PC-9 (cell line): ENCODE measurements at regions of chr15 and their contacts with region 1.

Region 1: DNA sequence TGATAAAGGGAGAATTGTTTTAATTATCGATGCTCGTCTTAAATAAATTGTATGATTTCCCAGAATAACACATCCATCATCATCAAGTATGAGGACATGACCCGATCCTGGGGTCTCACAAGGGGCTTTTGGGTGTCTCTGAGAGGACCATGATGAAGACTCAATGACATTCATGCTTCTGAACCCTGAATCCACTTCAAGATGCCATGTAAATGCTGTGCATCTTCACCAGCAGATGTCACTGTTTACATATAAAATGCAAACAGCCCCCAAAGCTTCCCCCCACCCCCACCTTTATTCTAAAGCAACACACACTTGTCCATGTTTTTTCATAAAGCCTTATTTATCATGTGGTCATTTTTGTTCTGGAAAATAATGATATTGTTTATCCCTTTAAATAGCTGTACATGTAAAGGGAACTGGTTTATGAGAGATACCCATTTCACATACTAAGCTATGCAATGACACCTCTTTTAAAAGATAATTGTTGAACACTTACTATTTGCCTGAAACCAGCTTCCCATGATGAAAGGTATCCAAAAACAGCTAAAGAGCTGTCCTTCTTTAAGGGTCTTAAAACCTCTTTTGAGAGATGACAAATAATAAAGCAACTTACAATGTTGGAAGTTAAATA is 69.7 kb upstream of the UBE3A start:
- DNase-seq: no peak
- H3K4me3 ChIP-seq: no peak overlapping the region
- H3K27ac ChIP-seq: no peak overlapping the region
- H3K4me1 ChIP-seq: no peaks in the 10 kb centered on the region
- H3K27me3 ChIP-seq: peaks cover 2% of the 10 kb centered on the region; the same call in 1 of the 2 replicates
- CTCF ChIP-seq: peak; percentile 58

Region 2: DNA sequence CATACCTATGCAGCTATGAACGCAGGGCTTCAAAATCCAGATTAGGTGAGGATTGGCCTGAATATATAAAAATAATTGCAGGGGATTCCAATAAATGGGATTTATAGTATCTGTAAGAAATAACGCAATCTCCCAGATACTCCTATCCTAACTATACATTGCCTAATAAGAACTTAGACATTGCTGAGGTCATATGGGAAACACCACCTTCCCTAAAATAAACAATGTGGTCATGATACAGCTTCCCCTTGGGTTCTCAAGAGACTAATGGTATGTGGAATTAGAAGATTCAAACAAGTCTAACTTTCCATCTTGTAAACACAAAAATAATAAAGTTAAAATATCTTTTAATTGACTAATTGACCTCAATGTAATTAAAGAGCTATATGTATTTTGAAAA is 97.8 kb before region 1 on chr15:
- CTCF ChIA-PET with region 1: no interaction called
- POLR2A ChIA-PET with region 1: no interaction called
- intact Hi-C with region 1: no loop called
- DNase-seq: no peak
- H3K4me3 ChIP-seq: no peak overlapping the region
- H3K27ac ChIP-seq: no peak overlapping the region
- H3K4me1 ChIP-seq: no peaks in the 10 kb centered on the region
- H3K27me3 ChIP-seq: no peaks in the 10 kb centered on the region
- CTCF ChIP-seq: no peak

Region 3: DNA sequence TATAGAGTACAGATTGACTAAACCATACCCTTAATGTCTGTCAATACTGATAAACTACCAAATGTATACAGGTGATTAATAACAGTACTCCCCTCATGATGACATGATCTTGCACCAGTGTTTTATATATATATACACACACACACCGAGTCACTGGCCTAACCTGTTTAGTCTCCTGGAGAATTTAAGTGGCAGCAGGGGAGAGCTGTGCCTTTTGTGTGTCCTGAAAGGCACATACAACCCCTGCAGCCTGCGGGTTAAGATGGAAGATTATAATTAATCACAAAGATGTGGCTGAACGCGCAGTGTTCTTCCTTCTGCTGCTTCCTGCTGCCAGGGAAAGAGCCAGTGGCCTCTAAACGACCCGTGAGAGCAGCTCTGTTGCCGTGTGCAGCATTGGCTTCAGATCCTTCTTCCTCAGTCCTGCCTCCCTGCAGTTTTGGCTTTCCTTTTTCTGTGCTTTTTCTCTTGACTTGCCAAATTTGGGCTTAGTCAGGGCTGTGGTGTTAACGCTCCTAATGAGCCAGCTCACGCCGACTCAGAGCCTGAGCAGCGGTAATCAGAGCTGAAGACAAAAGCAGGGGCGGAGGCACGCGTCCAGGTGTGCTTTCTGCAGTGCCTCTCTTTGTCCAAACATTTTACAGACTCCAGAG is 27.2 kb before region 1 on chr15:
- CTCF ChIA-PET with region 1: no interaction called
- POLR2A ChIA-PET with region 1: no interaction called
- intact Hi-C with region 1: no loop called
- DNase-seq: peak in 1 of 2 experiments; percentile 7
- H3K4me3 ChIP-seq: no peak overlapping the region
- H3K27ac ChIP-seq: no peak overlapping the region
- H3K4me1 ChIP-seq: no peaks in the 10 kb centered on the region
- H3K27me3 ChIP-seq: no peaks in the 10 kb centered on the region
- CTCF ChIP-seq: no peak

Region 4: DNA sequence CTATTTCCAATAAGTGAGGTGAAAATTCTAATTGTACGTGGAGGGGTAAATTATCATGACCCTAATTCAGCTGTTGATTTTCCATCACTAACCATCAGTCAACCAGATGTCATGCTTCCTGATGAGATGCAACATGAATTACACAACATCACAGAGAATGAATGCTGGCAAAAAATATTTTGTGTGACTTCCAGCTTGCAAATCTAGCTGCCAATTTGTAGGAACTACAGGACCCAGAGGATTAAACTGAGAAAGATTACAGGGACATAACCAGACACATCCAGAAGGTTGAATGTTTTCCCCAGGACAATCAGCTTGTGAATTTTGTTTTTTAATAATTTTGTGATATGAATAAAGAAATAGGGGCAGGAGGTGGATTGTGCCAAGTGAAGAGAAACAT is 703.6 kb after region 1 on chr15:
- CTCF ChIA-PET with region 1: no interaction called
- POLR2A ChIA-PET with region 1: no interaction called
- intact Hi-C with region 1: no loop called
- DNase-seq: no peak
- H3K4me3 ChIP-seq: no peak overlapping the region
- H3K27ac ChIP-seq: no peak overlapping the region
- H3K4me1 ChIP-seq: no peaks in the 10 kb centered on the region
- H3K27me3 ChIP-seq: no peaks in the 10 kb centered on the region
- CTCF ChIP-seq: no peak

Region 5: GRCh38 chr15:26864664-26865191 is 1356.2 kb after region 1 on chr15:
- CTCF ChIA-PET with region 1: no interaction called
- POLR2A ChIA-PET with region 1: no interaction called
- intact Hi-C with region 1: loop called (anchors 1 kb)
- DNase-seq: no peak
- H3K4me3 ChIP-seq: no peak overlapping the region
- H3K27ac ChIP-seq: no peak overlapping the region
- H3K4me1 ChIP-seq: no peaks in the 10 kb centered on the region
- H3K27me3 ChIP-seq: no peaks in the 10 kb centered on the region
- CTCF ChIP-seq: peak; percentile 57